CD4-positive, alpha-beta memory T cell (primary cell): ENCODE measurements at regions of chr15 and their contacts with region 1.

Region 1: DNA sequence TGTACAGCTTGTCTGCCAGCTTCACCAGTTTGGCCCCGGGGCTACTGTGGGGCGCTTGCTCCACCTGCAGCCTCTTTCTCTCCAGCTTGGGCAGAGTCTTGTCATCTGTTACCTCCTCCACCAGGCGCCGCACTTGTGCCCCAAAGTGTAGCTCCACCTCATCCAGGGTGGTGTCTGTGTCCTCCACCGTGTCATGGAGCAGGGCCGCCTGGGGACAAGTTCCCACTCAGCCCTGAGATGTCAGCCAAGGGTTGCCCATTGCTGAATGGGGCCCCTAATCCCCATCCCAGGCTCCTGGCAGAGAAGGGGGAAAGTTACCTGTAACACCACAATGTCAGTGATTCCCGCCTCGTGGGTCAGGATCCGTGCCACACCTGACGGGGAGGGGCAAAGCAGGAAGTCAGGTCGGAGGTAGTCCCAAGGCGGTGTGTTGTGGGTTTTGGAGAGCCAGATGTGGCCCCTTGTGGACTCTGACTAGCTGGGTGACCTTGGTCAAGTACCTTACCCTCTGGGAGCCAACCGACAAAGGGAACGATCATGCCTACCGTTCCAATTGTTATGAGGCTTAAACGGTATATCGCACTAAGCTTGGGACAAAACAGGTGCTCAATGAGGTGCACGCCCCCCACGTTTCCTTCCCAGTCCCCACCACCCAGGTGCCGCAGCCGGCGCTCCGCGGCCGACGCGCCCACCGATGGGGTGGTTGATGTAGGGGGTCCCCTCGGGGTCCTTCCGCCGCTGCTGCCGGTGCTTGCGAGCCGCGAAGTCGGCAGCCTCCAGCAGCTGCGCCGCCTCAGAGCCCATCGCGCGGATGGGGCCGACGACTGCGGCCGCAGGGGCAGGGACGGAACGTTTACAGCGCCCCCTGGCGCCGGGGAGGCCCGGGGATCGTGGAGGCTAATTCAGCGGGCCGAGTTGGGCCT is at the start of gene HDDC3:
- DNase-seq: peak; percentile 86 to 93 (median 88)
- H3K4me3 ChIP-seq: peak within 1 kb of the TSS; percentile 95 to 96
- H3K4me3 Mint-ChIP-seq: peak within 1 kb of the TSS; percentile 94 to 99 (median 98)
- H3K27ac ChIP-seq: peak within 1 kb of the TSS; percentile 82
- H3K27ac Mint-ChIP-seq: peak within 1 kb of the TSS; percentile 87 to 99 (median 99)
- H3K4me1 ChIP-seq: peaks cover 58% of the 10 kb centered on the region
- H3K4me1 Mint-ChIP-seq: peaks cover 35 to 77% (median 54%) of the 10 kb centered on the region in 4 donors
- H3K27me3 ChIP-seq: no peaks in the 10 kb centered on the region
- H3K27me3 Mint-ChIP-seq: no peaks in the 10 kb centered on the region
- total RNA-seq, gene HDDC3: 27.4 to 28.3 TPM

Region 2: GRCh38 chr15:90529371-90530249 is 402.4 kb before region 1 on chr15 and contains the start of gene CRTC3:
- CTCF ChIA-PET with region 1: no interaction called
- POLR2A ChIA-PET with region 1: no interaction called
- intact Hi-C with region 1: no loop called
- DNase-seq: peak; percentile 61 to 73 (median 65)
- H3K4me3 ChIP-seq: peak within 1 kb of the TSS; percentile 77 to 84
- H3K4me3 Mint-ChIP-seq: peak within 1 kb of the TSS; percentile 92 to 98 (median 94)
- H3K27ac ChIP-seq: peak within 1 kb of the TSS; percentile 64
- H3K27ac Mint-ChIP-seq: peak within 1 kb of the TSS; percentile 90 to 95 (median 94)
- H3K4me1 ChIP-seq: peaks cover 40% of the 10 kb centered on the region
- H3K4me1 Mint-ChIP-seq: peaks cover 29 to 49% (median 42%) of the 10 kb centered on the region in 4 donors
- H3K27me3 ChIP-seq: no peaks in the 10 kb centered on the region
- H3K27me3 Mint-ChIP-seq: no peaks in the 10 kb centered on the region
- total RNA-seq, gene CRTC3: 72.2 to 75.5 TPM

Region 3: DNA sequence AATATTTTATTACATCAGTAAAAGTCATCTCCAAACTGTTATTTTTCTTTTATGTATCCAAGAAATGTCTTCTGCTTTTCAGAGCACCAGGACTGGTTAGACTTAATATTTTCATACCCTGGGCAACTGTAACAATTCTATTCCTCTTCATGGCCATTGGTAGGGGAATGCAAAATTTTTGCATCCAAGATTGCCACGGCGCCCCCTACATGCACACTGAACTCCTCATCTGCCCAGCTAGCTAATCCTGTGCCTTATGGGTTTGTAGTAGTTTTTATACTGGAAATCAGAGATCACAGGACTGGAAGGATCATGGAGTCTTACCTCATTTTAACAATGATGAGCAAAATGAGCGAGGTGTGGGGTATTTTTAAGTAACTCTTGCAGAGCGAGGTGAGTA is 328.1 kb before region 1 on chr15:
- CTCF ChIA-PET with region 1: no interaction called
- POLR2A ChIA-PET with region 1: no interaction called
- intact Hi-C with region 1: no loop called
- DNase-seq: peak in 4 of 5 donors; percentile 22 to 35 (median 30)
- H3K4me3 ChIP-seq: no peak overlapping the region
- H3K4me3 Mint-ChIP-seq: no peak overlapping the region
- H3K27ac ChIP-seq: no peak overlapping the region
- H3K27ac Mint-ChIP-seq: peak overlapping the region in 5 of 7 donors; percentile 12 to 75 (median 60)
- H3K4me1 ChIP-seq: peaks cover 19% of the 10 kb centered on the region
- H3K4me1 Mint-ChIP-seq: peaks cover 9 to 41% (median 31%) of the 10 kb centered on the region in 4 donors
- H3K27me3 ChIP-seq: no peaks in the 10 kb centered on the region
- H3K27me3 Mint-ChIP-seq: no peaks in the 10 kb centered on the region

Region 4: DNA sequence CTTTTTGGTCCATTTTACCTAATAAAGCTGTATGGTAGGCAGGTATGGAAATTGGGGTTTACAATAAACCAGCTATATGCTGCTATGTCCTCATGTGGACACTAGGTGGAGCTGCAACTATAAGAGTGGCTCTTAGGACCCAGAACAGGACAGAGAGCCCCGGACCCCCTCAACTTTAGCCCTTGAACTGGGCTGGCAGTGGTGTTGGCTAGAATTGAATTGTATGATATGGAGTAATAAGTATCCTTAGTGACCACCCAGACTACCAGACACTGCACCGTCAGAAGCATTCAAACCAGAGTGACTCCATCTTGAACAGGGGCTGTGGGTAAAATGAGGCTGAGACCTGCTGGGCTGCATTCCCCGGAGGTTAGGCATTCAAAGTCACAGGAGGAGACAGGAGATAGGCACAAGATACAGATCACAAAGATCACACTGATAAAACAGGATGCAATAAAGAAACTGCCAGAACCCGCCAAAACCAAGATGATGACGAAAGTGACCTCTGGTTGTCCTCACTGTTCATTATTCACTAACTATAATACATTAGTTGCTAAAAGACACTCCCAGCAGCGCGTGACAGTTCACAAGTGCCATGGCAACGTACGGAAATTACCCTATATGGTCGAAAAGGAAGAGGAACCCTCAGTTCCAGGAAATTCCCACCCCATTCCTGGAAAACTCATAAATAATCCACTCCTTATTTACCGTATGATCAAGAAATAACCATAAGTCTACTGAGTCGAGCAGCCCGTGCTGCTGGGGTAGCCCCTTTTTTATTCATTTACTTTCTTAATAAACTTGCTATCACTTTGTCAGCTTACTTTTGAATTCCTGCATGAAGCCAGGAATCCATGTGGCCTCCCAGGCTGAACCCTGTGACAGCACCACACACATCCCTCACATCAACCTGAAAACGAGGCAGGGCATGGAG is 283.6 kb before region 1 on chr15:
- CTCF ChIA-PET with region 1: interaction called, 39 read pairs
- POLR2A ChIA-PET with region 1: interaction called, 3 read pairs
- intact Hi-C with region 1: loop called (anchors 1 kb)
- DNase-seq: peak; percentile 59 to 75 (median 67)
- H3K4me3 ChIP-seq: no peak overlapping the region
- H3K4me3 Mint-ChIP-seq: peak overlapping the region in 7 of 8 donors; percentile 53 to 80 (median 73)
- H3K27ac ChIP-seq: no peak overlapping the region
- H3K27ac Mint-ChIP-seq: peak overlapping the region; percentile 28 to 83 (median 75)
- H3K4me1 ChIP-seq: peaks cover 20% of the 10 kb centered on the region
- H3K4me1 Mint-ChIP-seq: peaks cover 14 to 27% (median 21%) of the 10 kb centered on the region in 4 donors
- H3K27me3 ChIP-seq: no peaks in the 10 kb centered on the region
- H3K27me3 Mint-ChIP-seq: peaks cover 0 to 3% of the 10 kb centered on the region in 2 donors

Region 5: GRCh38 chr15:90886041-90886614 is 45.9 kb before region 1 on chr15:
- CTCF ChIA-PET with region 1: interaction called, 25 read pairs
- POLR2A ChIA-PET with region 1: interaction called, 8 read pairs
- intact Hi-C with region 1: no loop called
- DNase-seq: peak; percentile 65 to 69 (median 66)
- H3K4me3 ChIP-seq: no peak overlapping the region
- H3K4me3 Mint-ChIP-seq: peak overlapping the region in 2 of 8 donors; percentile 52 to 77
- H3K27ac ChIP-seq: no peak overlapping the region
- H3K27ac Mint-ChIP-seq: peak overlapping the region in 3 of 7 donors; percentile 30 to 72 (median 60)
- H3K4me1 ChIP-seq: peaks cover 5% of the 10 kb centered on the region
- H3K4me1 Mint-ChIP-seq: peaks cover 2 to 17% (median 8%) of the 10 kb centered on the region in 4 donors
- H3K27me3 ChIP-seq: no peaks in the 10 kb centered on the region
- H3K27me3 Mint-ChIP-seq: peaks cover 5 to 9% of the 10 kb centered on the region in 2 donors

Region 6: DNA sequence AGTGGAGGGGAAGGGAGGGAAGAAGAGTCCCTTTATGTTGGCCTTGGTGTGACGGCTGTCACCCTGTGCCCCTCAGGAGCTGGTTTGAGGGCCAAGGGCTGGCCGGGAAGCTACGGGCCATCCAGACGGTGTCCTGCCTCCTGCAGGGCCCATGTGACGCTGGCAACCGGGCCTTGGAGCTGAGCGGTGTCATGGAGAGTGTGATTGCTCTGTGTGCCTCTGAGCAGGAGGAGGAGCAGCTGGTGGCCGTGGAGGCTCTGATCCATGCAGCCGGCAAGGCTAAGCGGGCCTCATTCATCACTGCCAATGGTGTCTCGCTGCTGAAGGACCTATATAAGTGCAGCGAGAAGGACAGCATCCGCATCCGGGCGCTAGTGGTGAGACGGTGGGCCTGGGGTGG is 14.5 kb after region 1 on chr15:
- CTCF ChIA-PET with region 1: interaction called, 155 read pairs
- POLR2A ChIA-PET with region 1: interaction called, 130 read pairs
- intact Hi-C with region 1: no loop called
- DNase-seq: no peak
- H3K4me3 ChIP-seq: no peak overlapping the region
- H3K4me3 Mint-ChIP-seq: no peak overlapping the region
- H3K27ac ChIP-seq: no peak overlapping the region
- H3K27ac Mint-ChIP-seq: no peak overlapping the region
- H3K4me1 ChIP-seq: no peaks in the 10 kb centered on the region
- H3K4me1 Mint-ChIP-seq: no peaks in the 10 kb centered on the region
- H3K27me3 ChIP-seq: no peaks in the 10 kb centered on the region
- H3K27me3 Mint-ChIP-seq: no peaks in the 10 kb centered on the region

Region 7: DNA sequence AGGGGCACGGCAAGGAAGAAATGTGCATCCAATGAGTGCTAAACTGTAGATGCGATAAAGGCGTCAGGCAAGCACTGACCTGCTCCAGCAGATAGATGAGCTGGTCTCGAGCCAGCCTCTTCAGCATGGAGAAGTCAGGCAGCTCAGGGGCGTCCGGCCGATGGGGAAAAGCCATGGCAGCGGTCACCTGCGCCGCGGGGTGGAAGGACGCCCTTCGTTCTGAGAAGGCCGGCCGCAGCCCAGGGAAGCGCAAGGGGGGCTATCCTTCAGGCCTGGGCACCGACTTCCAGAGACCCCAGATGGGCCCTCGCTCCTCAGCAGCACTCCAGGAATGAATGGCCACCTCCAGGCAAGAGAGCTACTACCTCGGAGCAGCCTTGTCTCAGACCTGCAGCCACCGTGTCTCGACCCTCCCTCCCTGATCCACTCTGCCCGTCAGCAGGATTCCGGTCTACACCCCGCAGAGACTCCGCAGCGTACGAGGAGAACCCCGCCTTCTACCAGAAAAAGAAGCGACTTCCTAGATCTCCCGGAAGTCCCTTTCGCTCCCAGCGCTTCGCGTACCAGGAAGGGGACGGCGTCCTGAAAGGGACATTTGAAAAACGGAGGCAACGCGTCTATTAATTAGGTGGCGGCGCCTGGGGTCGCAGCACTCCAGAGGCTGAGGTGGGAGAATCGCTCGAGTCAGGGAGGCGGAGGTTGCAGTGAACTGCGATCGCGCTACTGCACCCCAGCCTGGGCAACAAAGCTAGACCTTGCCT is 90.3 kb after region 1 on chr15 and contains the start of gene VPS33B:
- CTCF ChIA-PET with region 1: interaction called, 26 read pairs
- POLR2A ChIA-PET with region 1: interaction called, 5 read pairs
- intact Hi-C with region 1: loop called (anchors 2 kb)
- DNase-seq: peak; percentile 78 to 83 (median 80)
- H3K4me3 ChIP-seq: peak within 1 kb of the TSS; percentile 80 to 82
- H3K4me3 Mint-ChIP-seq: peak within 1 kb of the TSS; percentile 96 to 99 (median 98)
- H3K27ac ChIP-seq: peak within 1 kb of the TSS; percentile 83
- H3K27ac Mint-ChIP-seq: peak within 1 kb of the TSS; percentile 88 to 98 (median 97)
- H3K4me1 ChIP-seq: peaks cover 34% of the 10 kb centered on the region
- H3K4me1 Mint-ChIP-seq: peaks cover 31 to 57% (median 41%) of the 10 kb centered on the region in 4 donors
- H3K27me3 ChIP-seq: no peaks in the 10 kb centered on the region
- H3K27me3 Mint-ChIP-seq: no peaks in the 10 kb centered on the region
- total RNA-seq, gene VPS33B: 26.9 to 27.8 TPM

Region 8: GRCh38 chr15:91068966-91069365 is 137.0 kb after region 1 on chr15:
- CTCF ChIA-PET with region 1: no interaction called
- POLR2A ChIA-PET with region 1: no interaction called
- intact Hi-C with region 1: no loop called
- DNase-seq: no peak
- H3K4me3 ChIP-seq: no peak overlapping the region
- H3K4me3 Mint-ChIP-seq: no peak overlapping the region
- H3K27ac ChIP-seq: no peak overlapping the region
- H3K27ac Mint-ChIP-seq: no peak overlapping the region
- H3K4me1 ChIP-seq: no peaks in the 10 kb centered on the region
- H3K4me1 Mint-ChIP-seq: no peaks in the 10 kb centered on the region
- H3K27me3 ChIP-seq: peaks cover 5% of the 10 kb centered on the region
- H3K27me3 Mint-ChIP-seq: peaks cover 18% of the 10 kb centered on the region in 2 donors

Region 9: GRCh38 chr15:91469632-91470567 is 537.9 kb after region 1 on chr15:
- CTCF ChIA-PET with region 1: no interaction called
- POLR2A ChIA-PET with region 1: no interaction called
- intact Hi-C with region 1: loop called (anchors 10 kb)
- DNase-seq: peak; percentile 55 to 90 (median 87)
- H3K4me3 ChIP-seq: no peak overlapping the region
- H3K4me3 Mint-ChIP-seq: peak overlapping the region; percentile 10 to 76 (median 64)
- H3K27ac ChIP-seq: peak overlapping the region; percentile 57
- H3K27ac Mint-ChIP-seq: peak overlapping the region; percentile 87 to 99 (median 95)
- H3K4me1 ChIP-seq: peaks cover 82% of the 10 kb centered on the region
- H3K4me1 Mint-ChIP-seq: peaks cover 39 to 73% (median 53%) of the 10 kb centered on the region in 4 donors
- H3K27me3 ChIP-seq: no peaks in the 10 kb centered on the region
- H3K27me3 Mint-ChIP-seq: no peaks in the 10 kb centered on the region